ENCODE measurements at regions of chr12 and their contacts with region 1.

Region 1: DNA sequence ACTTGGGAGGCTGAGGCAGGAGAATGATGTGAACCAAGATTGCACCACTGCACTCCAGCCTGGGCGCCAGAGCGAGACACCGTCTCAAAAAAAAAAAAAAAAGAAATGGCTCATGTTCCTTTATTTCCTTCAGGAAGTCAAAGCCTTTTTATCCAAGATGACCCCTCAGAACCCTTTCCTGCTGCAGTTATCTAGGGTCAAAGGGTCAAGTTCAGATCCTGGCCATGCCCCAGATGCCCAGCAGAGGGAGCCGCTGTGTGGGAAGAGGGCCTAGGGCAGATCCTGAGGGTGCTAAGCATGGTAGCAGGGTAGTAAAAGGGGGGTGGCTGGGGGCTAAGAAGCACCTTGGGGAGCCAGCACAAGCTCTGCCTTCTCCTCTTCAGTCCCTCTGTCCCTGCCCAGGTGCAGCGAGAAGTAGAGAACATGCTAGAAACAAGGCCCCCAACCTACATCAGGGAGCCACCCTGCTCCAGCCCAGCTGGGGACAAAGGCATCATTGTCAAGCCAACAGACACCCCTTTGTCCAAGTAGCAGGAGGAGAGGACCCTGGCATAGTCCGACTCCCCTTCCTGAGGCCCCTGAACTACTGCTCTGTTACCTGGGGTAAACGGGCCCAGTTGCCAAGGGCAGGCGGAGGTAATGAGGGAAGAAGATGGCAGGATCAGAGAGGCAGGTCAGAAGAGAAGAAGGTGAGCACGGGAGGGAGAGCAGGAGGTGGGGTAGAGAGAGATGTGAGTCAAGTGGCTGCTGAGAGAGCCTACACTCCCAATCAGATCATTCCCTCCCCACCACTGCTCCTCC is 6.5 kb downstream of the NFE2 start:
- DNase-seq: peak; percentile 40 to 50 (median 45)
- H3K4me3 ChIP-seq: no peak overlapping the region
- H3K4me3 Mint-ChIP-seq: no peak overlapping the region
- H3K27ac ChIP-seq: no peak overlapping the region
- H3K27ac Mint-ChIP-seq: no peak overlapping the region
- H3K4me1 ChIP-seq: peaks cover 7% of the 10 kb centered on the region
- H3K4me1 Mint-ChIP-seq: peaks cover 4 to 8% (median 6%) of the 10 kb centered on the region in 4 donors
- H3K27me3 ChIP-seq: no peaks in the 10 kb centered on the region
- H3K27me3 Mint-ChIP-seq: peaks cover 2 to 10% of the 10 kb centered on the region in 2 donors

Region 2: GRCh38 chr12:54259194-54260011 is 34.9 kb before region 1 on chr12:
- CTCF ChIA-PET with region 1: interaction called, 43 read pairs
- POLR2A ChIA-PET with region 1: no interaction called
- intact Hi-C with region 1: loop called (anchors 5 kb)
- DNase-seq: peak in 4 of 5 donors; percentile 17 to 53 (median 40)
- H3K4me3 ChIP-seq: no peak overlapping the region
- H3K4me3 Mint-ChIP-seq: peak overlapping the region in 1 of 8 donors; percentile 51
- H3K27ac ChIP-seq: no peak overlapping the region
- H3K27ac Mint-ChIP-seq: peak overlapping the region in 4 of 7 donors; percentile 28 to 57 (median 46)
- H3K4me1 ChIP-seq: peaks cover 22% of the 10 kb centered on the region
- H3K4me1 Mint-ChIP-seq: peaks cover 11 to 26% (median 16%) of the 10 kb centered on the region in 4 donors
- H3K27me3 ChIP-seq: no peaks in the 10 kb centered on the region
- H3K27me3 Mint-ChIP-seq: no peaks in the 10 kb centered on the region

Region 3: DNA sequence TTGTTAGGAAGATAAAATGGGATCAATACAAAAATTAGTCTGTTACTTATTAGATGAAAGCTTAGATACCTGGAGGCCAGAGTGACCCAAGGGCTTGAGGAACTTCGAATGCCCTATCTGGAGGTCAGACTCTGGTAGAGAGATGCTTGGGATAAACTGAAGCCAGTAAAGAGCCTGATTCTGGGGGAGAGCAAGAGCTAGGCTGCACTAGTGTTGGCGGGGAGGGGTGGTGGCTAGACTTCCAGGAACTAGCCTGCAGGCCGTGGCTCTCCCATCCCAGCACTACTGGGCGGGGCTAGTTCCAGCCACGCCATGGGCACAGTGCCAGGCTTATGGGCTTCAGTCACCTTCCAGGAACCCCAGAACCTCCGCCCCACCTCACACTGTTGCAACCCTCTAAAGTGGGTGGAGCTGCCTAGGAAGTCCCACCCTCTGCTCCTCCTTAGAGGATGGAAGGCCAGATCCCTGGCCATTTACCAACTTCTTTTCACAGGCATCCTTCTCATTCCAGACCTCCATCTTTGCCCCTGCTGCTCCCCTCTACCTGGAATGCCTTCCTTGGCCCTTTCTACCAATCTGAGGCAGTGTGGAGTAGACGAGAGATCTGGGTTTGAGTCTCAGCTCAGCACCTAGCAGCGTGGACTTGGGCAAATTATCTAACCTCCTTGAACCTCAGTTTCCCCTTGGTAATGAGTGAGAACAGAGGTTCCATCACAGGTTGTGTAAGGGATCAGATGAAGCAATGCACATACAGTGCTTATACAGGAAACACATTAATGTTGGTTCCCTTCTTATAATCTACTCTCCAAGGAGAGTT is 12.8 kb after region 1 on chr12:
- CTCF ChIA-PET with region 1: interaction called, 16 read pairs
- POLR2A ChIA-PET with region 1: interaction called, 3 read pairs
- intact Hi-C with region 1: no loop called
- DNase-seq: no peak
- H3K4me3 ChIP-seq: no peak overlapping the region
- H3K4me3 Mint-ChIP-seq: peak overlapping the region in 1 of 8 donors; percentile 31
- H3K27ac ChIP-seq: no peak overlapping the region
- H3K27ac Mint-ChIP-seq: peak overlapping the region in 1 of 7 donors; percentile 32
- H3K4me1 ChIP-seq: peaks cover 16% of the 10 kb centered on the region
- H3K4me1 Mint-ChIP-seq: peaks cover 7 to 29% (median 14%) of the 10 kb centered on the region in 4 donors
- H3K27me3 ChIP-seq: peaks cover under 1% of the 10 kb centered on the region
- H3K27me3 Mint-ChIP-seq: peaks cover 8 to 19% of the 10 kb centered on the region in 2 donors

Region 4: DNA sequence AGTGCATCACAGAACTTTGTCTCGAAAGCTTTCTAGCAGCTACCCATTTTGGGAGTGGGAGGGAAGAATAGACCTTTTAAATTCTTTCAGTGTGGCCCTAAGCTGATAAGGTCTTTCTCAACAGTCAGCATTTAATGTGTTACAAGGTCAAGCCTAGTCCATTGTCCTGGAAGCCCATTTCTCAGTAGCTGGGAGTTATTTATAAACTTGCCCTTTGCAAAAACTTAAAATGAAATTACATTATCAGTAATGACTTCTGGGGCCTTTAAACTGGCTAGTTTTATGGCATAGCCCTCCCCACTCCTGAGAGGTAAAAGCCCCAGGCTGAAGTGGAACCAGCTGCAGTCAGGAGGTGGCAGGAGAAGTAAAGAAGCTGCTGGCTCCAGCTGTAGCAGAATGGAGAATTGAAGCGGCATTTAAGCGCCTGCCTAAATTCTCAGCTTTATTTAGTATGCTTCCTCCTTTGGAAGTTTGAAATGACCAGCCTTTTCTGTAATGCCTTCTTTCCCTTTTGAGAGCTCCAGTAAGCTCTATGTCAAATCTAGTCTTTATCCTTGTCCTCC is 43.0 kb after region 1 on chr12:
- CTCF ChIA-PET with region 1: interaction called, 34 read pairs
- POLR2A ChIA-PET with region 1: no interaction called
- intact Hi-C with region 1: no loop called
- DNase-seq: no peak
- H3K4me3 ChIP-seq: no peak overlapping the region
- H3K4me3 Mint-ChIP-seq: no peak overlapping the region
- H3K27ac ChIP-seq: no peak overlapping the region
- H3K27ac Mint-ChIP-seq: peak overlapping the region in 3 of 7 donors; percentile 48 to 51 (median 48)
- H3K4me1 ChIP-seq: peaks cover 4% of the 10 kb centered on the region
- H3K4me1 Mint-ChIP-seq: peaks cover 6 to 29% (median 15%) of the 10 kb centered on the region in 4 donors
- H3K27me3 ChIP-seq: no peaks in the 10 kb centered on the region
- H3K27me3 Mint-ChIP-seq: no peaks in the 10 kb centered on the region

Region 5: GRCh38 chr12:54359033-54359761 is 64.8 kb after region 1 on chr12:
- CTCF ChIA-PET with region 1: interaction called, 110 read pairs
- POLR2A ChIA-PET with region 1: interaction called, 14 read pairs
- intact Hi-C with region 1: loop called (anchors 1 kb)
- DNase-seq: peak; percentile 93 to 99 (median 95)
- H3K4me3 ChIP-seq: peak overlapping the region; percentile 87 to 91
- H3K4me3 Mint-ChIP-seq: no peak overlapping the region
- H3K27ac ChIP-seq: peak overlapping the region; percentile 95
- H3K27ac Mint-ChIP-seq: no peak overlapping the region
- H3K4me1 ChIP-seq: peaks cover 36% of the 10 kb centered on the region
- H3K4me1 Mint-ChIP-seq: peaks cover 10 to 19% (median 14%) of the 10 kb centered on the region in 4 donors
- H3K27me3 ChIP-seq: no peaks in the 10 kb centered on the region
- H3K27me3 Mint-ChIP-seq: no peaks in the 10 kb centered on the region

Measured in CD4-positive, alpha-beta memory T cell (primary cell).